ENCODE measurements at regions of chr16 and their contacts with region 1.

Region 1: GRCh38 chr16:3150346-3151218 is 15.8 kb downstream of the ZNF213 start:
- DNase-seq: peak; percentile 98
- ATAC-seq: peak; percentile 78
- H3K4me3 Mint-ChIP-seq: peak overlapping the region; percentile 93
- H3K27ac Mint-ChIP-seq: peak overlapping the region; percentile 96
- H3K4me1 Mint-ChIP-seq: peaks cover 7% of the 10 kb centered on the region
- H3K27me3 Mint-ChIP-seq: peaks cover 37% of the 10 kb centered on the region
- CTCF ChIP-seq: no peak

Region 2: DNA sequence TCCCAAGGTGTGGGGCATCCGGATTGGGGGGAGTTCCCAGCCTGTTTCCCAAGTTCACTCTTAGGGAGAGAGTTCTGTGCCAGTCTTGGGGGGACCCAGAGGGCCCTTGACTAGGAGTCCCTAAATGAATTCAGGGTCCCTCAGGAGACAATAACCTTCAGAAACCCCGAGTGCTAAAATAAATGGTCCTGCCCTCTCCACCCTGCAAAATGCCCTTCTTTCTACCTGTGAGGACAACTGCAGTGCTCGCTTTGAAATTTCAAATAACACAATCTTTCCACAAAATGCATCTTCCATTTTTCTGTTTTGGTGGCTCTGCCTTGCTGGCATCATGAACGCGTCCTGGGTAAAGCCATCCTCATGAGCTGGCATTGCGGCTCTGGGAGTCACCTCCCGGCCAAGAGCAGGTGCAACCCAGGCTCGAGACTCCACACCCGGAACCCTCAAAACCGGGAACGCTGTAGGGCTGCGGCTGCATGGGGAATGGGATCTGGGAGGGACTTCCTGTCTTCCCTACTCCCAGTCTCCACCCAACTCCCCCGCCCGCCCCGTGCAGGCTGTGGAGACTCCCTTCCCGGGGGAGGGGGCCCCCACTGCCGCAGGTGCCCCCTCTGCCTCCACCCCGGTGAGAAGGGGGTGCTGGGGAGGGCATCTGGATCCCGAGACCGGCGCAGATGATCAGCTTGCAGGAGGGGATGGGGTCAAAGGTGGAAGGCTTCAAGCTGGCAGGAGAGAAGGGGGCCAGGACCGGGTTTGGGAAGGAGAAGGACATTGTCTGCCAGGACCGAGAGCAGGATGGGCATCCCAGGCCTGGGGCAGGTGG is 38.3 kb before region 1 on chr16 and contains the start of gene ZNF205:
- CTCF ChIA-PET with region 1: interaction called, 11 read pairs
- POLR2A ChIA-PET with region 1: interaction called, 3 read pairs
- DNase-seq: peak; percentile 88
- ATAC-seq: peak; percentile 94
- H3K4me3 Mint-ChIP-seq: peak within 1 kb of the TSS; percentile 88
- H3K27ac Mint-ChIP-seq: peak within 1 kb of the TSS; percentile 94
- H3K4me1 Mint-ChIP-seq: peaks cover 27% of the 10 kb centered on the region
- H3K27me3 Mint-ChIP-seq: no peaks in the 10 kb centered on the region
- CTCF ChIP-seq: no peak
- total RNA-seq, gene ZNF205: 17.7 to 22.7 TPM (median 21.3 TPM) in 3 replicates

Region 3: GRCh38 chr16:3134564-3135417 is 15.8 kb before region 1 on chr16 and contains the start of gene ZNF213:
- CTCF ChIA-PET with region 1: interaction called, 54 read pairs
- POLR2A ChIA-PET with region 1: interaction called, 9 read pairs
- DNase-seq: peak; percentile 94
- ATAC-seq: peak; percentile 94
- H3K4me3 Mint-ChIP-seq: peak within 1 kb of the TSS; percentile 98
- H3K27ac Mint-ChIP-seq: peak within 1 kb of the TSS; percentile 99
- H3K4me1 Mint-ChIP-seq: peaks cover 17% of the 10 kb centered on the region
- H3K27me3 Mint-ChIP-seq: no peaks in the 10 kb centered on the region
- CTCF ChIP-seq: no peak
- total RNA-seq, gene ZNF213: 8.9 to 11.6 TPM (median 10.3 TPM) in 3 replicates

Region 4: GRCh38 chr16:3165111-3165822 is 14.7 kb after region 1 on chr16:
- CTCF ChIA-PET with region 1: interaction called, 75 read pairs
- POLR2A ChIA-PET with region 1: interaction called, 46 read pairs
- DNase-seq: no peak
- ATAC-seq: no peak
- H3K4me3 Mint-ChIP-seq: no peak overlapping the region
- H3K27ac Mint-ChIP-seq: no peak overlapping the region
- H3K4me1 Mint-ChIP-seq: peaks cover 7% of the 10 kb centered on the region
- H3K27me3 Mint-ChIP-seq: peaks cover 36% of the 10 kb centered on the region
- CTCF ChIP-seq: no peak

Region 5: DNA sequence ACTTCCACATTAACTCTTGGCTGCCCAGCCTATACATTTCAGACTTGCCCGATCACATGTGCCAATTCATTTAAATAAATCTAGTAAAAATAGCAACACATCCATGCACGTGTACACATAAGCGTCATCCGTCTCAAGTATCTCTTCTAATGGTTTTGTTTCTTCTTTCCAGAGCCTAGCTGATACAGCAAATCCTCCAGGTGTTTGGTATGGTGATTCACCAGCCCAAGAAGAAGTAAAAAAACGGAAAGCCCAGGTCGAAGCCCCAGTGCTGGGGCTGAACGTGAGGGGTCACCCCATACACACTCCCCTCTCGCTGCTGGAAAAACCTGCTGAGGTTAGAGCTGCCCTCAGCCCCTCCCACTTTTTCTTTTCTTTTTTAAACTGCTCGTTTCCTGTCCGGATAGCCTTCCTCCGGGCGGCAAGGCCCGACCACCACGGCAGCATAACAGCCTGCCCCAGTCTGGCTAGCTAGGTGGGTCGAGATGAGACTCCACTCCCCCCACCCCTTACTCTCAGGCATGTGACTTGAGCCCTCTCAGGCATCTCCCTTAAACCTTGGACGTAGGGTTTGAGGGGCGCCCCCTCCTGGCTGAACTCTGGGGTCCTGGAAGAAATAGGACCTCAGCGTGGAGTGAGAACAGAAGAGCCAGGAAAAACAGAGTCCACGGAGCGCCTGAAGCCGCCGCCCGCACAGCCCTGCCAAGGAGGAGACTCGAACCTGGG is 23.5 kb after region 1 on chr16:
- CTCF ChIA-PET with region 1: interaction called, 31 read pairs
- POLR2A ChIA-PET with region 1: interaction called, 46 read pairs
- DNase-seq: peak; percentile 92
- ATAC-seq: peak; percentile 34
- H3K4me3 Mint-ChIP-seq: peak overlapping the region; percentile 75
- H3K27ac Mint-ChIP-seq: peak overlapping the region; percentile 85
- H3K4me1 Mint-ChIP-seq: peaks cover 25% of the 10 kb centered on the region
- H3K27me3 Mint-ChIP-seq: peaks cover 57% of the 10 kb centered on the region
- CTCF ChIP-seq: peak; percentile 62; the same call in 1 of the 2 replicates

Region 6: GRCh38 chr16:3182608-3183444 is 32.2 kb after region 1 on chr16:
- CTCF ChIA-PET with region 1: interaction called, 23 read pairs
- POLR2A ChIA-PET with region 1: interaction called, 14 read pairs
- DNase-seq: peak; percentile 85
- ATAC-seq: peak; percentile 23
- H3K4me3 Mint-ChIP-seq: peak overlapping the region; percentile 98
- H3K27ac Mint-ChIP-seq: 0 out of 2 replicates have a peak overlapping the region, but pooled peaks have one; percentile 65
- H3K4me1 Mint-ChIP-seq: peaks cover 19% of the 10 kb centered on the region
- H3K27me3 Mint-ChIP-seq: peaks cover 59% of the 10 kb centered on the region
- CTCF ChIP-seq: no peak

Region 7: GRCh38 chr16:3188925-3189825 is 38.6 kb after region 1 on chr16:
- CTCF ChIA-PET with region 1: interaction called, 23 read pairs
- POLR2A ChIA-PET with region 1: no interaction called
- DNase-seq: peak; percentile 80
- ATAC-seq: peak; percentile 35
- H3K4me3 Mint-ChIP-seq: peak overlapping the region; percentile 97
- H3K27ac Mint-ChIP-seq: no peak overlapping the region; the same call in 1 of the 2 replicates
- H3K4me1 Mint-ChIP-seq: peaks cover 18% of the 10 kb centered on the region
- H3K27me3 Mint-ChIP-seq: peaks cover 61% of the 10 kb centered on the region
- CTCF ChIP-seq: no peak

Measured in WTC11 (cell line).